ENCODE measurements at regions of chr17 and their contacts with region 1.

Region 1: DNA sequence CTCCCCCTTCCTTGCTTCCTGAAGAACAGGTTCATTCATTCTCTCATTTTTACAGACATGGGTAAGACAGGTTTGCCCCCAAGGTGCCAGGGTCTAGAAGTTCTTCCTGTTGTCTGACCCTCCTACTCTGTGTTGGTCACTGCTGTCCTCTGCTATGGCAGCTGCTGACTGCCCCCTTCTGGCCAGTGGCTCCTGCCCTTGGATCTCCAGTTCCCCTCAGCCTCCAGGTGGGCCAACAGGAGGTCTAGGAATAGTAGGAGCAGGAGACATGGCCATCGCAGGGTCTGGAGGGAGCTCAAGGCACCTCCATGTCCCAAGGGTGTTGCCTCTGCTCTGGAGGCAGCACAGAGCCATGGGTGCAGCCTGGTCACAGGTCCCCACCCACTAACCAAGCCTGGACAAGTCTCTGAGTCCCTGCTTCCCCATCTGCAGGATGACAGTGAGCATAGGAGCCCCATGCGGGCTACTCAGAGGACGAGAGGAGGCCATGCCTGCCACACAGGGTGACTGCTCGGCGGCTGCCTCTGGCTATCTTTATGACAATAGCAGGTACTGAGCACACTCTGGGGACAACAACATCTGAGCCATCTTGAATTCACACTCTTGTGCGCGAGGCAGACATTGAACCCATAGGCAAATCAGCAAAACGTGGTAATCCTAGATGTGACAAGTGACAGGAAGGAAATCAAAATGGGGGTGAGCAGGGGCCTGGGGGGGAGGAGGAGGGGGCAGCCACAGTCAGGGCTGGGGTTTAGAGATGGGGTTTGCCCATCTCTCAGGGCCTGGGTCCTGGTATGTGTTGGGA is 27.0 kb upstream of the NXPH3 start:
- DNase-seq: peak; percentile 76

Region 2: GRCh38 chr17:49434821-49435670 is 113.7 kb before region 1 on chr17:
- intact Hi-C with region 1: loop called (anchors 2 kb)
- DNase-seq: no peak

Region 3: DNA sequence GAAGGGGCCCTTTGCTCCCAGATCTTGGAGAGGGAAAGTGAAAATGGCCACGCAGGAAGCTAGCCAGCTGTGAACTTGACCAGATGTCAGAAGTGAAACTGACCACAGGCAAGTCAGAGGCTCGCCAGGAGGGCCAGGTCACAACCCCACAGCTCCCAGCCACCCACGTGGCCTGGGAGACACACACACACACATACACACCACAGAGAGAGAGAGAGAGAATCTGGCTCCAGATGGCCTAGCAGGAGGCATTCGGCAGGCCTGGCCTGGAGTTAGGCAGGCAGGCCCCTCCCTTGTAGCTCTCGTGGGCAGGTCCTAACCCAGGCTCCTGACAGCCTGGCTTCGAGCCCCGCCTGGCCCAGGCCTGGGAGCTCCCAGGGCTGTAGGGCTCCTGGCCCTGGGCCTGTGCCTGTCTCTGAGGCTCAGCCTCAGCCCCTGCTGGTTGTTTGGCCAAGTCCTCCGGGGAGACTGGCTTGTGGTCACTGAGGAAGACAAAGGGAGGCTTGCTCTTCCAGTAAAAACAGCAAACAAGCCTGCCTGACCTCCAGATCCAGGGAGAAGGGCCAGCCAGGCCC is 33.4 kb before region 1 on chr17:
- intact Hi-C with region 1: loop called (anchors 5 kb)
- DNase-seq: peak; percentile 94